ENCODE measurements at regions of chr1 and their contacts with region 1.

Region 1: DNA sequence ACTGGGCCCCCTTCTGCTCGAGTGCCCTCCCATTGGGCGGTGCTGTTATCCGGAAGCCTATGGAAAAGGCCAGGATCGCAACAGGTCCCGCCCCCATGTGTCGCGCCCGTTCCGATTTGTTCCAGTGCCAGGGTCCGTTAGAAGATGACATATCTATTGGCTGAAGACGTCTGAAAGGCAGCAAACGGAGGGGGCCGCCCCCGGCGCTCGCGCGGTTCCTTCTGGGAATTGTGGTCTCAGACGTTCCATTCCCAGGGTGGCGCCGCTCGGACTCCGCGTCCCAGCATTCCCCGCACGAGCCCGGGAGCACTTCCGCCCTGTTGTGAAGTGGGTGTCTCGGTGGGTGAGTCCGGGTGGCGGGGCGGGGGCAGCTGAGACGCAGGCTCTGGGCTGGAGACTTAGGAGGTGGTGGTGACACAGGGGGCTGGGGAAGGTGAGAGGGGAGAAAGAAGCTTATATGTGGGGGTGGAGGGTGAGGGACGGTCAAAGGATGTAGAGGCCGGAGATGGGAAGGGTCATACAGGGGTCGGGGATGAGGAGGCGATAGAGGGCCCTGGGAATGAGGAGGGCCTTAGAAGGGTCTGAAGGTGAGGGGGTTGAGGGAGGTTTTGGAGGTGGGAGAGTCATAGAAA is at the start of gene ZSCAN20:
- DNase-seq: peak; percentile 99

Region 2: DNA sequence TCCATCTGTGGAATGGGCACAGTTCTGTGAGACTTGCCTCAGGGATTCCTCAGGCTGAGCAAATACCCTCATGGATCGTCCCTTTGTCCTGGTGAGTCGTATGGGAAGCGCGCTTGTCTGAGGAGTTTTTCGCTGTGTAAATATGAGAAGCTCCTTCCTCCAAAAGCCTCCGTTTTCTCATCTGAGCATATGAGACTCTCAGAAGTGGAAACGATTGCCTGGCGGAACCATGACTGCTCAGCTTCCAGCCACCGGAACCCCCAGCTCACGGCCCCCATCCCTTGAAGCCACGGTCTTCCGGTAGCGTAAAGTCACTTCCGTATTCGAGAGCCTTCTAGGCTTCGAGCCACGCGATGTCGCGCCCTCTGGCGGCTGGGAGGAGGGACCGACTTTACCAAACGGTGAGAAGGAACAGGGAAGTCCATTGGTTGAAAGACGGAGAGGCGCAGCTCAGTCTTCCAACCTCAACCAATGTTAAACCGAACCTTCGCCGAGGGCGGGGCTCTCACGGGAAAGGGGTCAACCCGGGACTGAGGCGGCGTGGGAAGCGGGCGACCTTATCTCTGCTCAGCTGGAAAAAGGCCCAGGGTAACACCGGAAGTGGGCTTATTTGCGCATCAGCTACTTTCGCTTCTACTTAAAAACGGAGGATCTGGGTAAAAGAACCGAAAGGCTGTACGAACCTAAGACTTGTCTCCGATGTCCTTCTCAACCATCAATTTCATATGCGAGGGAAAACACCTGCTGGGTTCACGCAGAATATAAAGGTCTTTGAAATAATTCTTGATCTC is 345.3 kb before region 1 on chr1:
- in situ Hi-C with region 1: loop called (anchors 25 kb)
- DNase-seq: peak; percentile 99